A549 (cell line): ENCODE measurements at regions of chr1 and their contacts with region 1.

Region 1: DNA sequence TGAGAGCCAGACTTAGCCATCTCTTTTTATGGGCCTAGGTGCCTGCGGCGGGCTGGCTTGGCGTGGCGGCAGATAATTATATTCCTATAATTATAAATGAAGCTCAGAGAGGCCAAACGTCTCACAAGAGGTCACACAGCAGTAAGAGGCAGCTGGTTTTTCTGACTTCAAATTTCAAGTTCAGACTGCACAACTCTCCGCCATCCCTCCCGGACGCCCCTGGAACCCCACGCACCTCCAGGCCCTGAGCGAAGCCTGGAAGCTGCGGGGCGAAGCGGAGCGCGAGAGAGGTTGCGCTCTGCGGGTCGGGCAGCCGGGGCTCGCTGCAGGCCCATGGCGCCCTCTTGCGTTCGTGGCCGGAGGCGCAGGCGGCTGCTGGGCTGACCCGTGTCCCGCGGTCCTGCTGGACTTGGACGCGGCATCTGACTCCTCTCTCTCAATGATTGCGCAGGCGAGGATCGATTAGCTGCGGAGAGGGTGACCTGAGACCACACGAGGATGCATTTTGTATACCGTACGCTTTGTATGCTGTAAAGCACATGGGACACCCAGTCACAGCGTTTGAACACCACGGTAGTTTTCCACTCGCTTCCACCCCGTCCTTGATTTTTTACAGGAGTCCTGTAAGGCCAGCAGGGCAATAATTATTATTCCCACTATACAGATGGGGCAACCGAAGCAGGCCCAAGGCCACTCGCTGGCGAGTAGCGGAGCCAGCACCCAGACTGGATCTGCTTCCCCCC is 272.7 kb downstream of the FOXD2 start:
- DNase-seq: peak; percentile 49 to 84
- ATAC-seq: peak; percentile 81 to 90
- H3K4me3 ChIP-seq: peak overlapping the region; percentile 51
- H3K27ac ChIP-seq: peak overlapping the region; percentile 69 to 87; a peak in 4 of 6 replicates
- H3K4me1 ChIP-seq: peaks cover 12% of the 10 kb centered on the region; the same call in 2 of the 3 replicates
- CTCF ChIP-seq: peak; percentile 86
- EP300 ChIP-seq: no peak
- POLR2A ChIP-seq: no peak
- RAD21 ChIP-seq: peak; percentile 77 to 93

Region 2: GRCh38 chr1:47388891-47389238 is 321.6 kb before region 1 on chr1:
- CTCF ChIA-PET with region 1: interaction called, 15 read pairs
- POLR2A ChIA-PET with region 1: no interaction called
- DNase-seq: peak; percentile 53 to 60
- ATAC-seq: peak; percentile 94 to 96
- H3K4me3 ChIP-seq: no peak overlapping the region
- H3K27ac ChIP-seq: no peak overlapping the region
- H3K4me1 ChIP-seq: no peaks in the 10 kb centered on the region
- CTCF ChIP-seq: peak; percentile 63
- EP300 ChIP-seq: no peak
- POLR2A ChIP-seq: no peak
- RAD21 ChIP-seq: peak; percentile 70 to 74

Region 3: DNA sequence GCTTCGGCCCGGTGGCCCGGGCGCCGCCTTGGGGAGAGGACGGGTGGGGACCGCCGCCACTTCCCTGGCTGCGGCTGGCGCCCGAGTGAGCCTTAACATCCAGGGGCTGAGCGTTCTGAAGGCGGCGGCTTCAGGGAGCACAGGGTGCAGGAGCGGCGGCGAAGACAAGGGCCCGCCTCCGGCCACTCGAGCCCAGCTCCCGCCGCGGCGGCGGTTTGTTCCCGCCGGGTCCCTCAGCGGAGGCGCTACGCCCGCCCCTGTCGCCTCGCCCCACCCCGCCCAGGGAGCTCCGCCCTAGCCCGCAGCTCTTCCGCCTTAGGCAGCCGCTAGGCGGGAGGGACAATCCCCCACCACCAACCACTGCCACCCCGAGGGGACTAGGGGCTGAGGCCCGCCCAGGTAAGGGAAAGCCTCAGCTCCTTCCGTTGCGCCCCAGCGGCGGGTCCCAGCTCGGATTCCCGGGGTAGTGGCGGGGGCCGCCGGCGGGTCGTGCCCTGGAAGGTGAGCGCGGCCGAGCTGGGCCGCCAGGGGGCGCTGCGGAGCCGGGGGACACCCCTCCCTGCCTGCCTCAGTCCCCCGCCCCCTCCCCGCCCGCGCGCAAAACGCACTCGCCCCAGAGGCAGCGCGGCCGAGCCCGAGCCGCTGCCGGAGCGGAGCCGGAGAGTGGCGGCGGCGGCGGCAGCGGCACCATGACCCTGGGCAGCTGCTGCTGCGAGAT is 272.9 kb before region 1 on chr1 and contains the start of gene FOXD2:
- CTCF ChIA-PET with region 1: interaction called, 313 read pairs
- POLR2A ChIA-PET with region 1: interaction called, 13 read pairs
- DNase-seq: peak; percentile 77 to 84
- ATAC-seq: peak; percentile 88 to 90
- H3K4me3 ChIP-seq: peak within 1 kb of the TSS; percentile 96
- H3K27ac ChIP-seq: peak within 1 kb of the TSS; percentile 95 to 99
- H3K4me1 ChIP-seq: peaks cover 7% of the 10 kb centered on the region; the same call in 1 of the 3 replicates
- CTCF ChIP-seq: peak; percentile 94
- EP300 ChIP-seq: no peak
- POLR2A ChIP-seq: peak; percentile 58
- RAD21 ChIP-seq: peak; percentile 26 to 83; a peak in 4 of 5 replicates
- polyA plus RNA-seq, gene FOXD2: 0.12 and 0.13 TPM in 2 replicates

Region 4: GRCh38 chr1:47449822-47450552 is 260.5 kb before region 1 on chr1:
- CTCF ChIA-PET with region 1: interaction called, 52 read pairs
- POLR2A ChIA-PET with region 1: no interaction called
- DNase-seq: peak; percentile 39 to 67
- ATAC-seq: peak; percentile 77 to 95
- H3K4me3 ChIP-seq: no peak overlapping the region
- H3K27ac ChIP-seq: peak overlapping the region in 1 of 2 experiments; percentile 33; a peak in 1 of 6 replicates
- H3K4me1 ChIP-seq: no peaks in the 10 kb centered on the region
- CTCF ChIP-seq: peak; percentile 53
- EP300 ChIP-seq: no peak
- POLR2A ChIP-seq: no peak
- RAD21 ChIP-seq: peak; percentile 64 to 69

Region 5: GRCh38 chr1:47569681-47570470 is 140.6 kb before region 1 on chr1:
- CTCF ChIA-PET with region 1: interaction called, 18 read pairs
- POLR2A ChIA-PET with region 1: no interaction called
- DNase-seq: peak; percentile 84 to 86
- ATAC-seq: peak; percentile 93 to 99
- H3K4me3 ChIP-seq: no peak overlapping the region
- H3K27ac ChIP-seq: peak overlapping the region; percentile 63 to 80
- H3K4me1 ChIP-seq: peaks cover 12% of the 10 kb centered on the region
- CTCF ChIP-seq: peak; percentile 48
- EP300 ChIP-seq: no peak
- POLR2A ChIP-seq: no peak
- RAD21 ChIP-seq: peak; percentile 50 to 51; a peak in 4 of 5 replicates

Region 6: DNA sequence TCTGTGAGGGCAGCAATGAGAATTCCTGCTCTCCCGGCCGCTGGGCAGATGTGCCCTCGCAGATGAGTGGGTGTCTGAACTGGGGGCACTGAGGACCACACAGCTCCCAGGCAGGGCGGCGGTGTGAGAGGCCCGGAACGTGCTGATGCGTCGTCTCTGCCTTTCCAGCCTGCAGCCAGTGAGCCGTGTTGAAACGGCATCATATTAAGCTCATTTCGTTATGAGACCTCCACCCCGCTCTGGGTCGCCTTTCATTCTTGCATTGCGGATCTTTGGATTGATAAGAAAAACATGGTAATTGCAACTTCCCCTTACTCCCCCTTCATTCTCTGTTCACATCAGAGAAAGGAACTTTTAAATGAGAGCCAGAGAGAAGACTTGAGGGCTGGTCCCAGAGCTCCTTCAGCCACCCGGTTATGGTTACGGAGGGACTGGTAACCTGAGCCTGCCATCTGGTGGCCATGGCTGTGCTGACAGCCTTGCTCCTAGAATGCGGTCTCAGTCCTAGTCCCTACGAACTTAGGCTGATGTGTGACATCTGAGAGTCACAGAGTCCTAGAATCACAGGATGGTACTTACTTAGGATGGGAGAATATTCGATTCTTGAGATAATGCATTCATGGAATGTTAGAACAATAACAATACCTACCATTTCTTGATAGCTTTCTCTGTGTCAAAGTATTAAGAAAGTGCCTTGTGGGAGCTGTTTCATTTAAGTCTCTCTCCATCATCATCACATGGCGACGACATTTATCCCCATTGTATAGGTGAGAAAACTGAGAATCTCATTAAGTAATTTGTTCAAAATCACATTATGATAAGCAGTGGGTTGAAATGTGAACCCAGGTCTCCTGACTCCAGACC is 15.7 kb after region 1 on chr1:
- CTCF ChIA-PET with region 1: interaction called, 97 read pairs
- POLR2A ChIA-PET with region 1: no interaction called
- DNase-seq: peak; percentile 74 to 82
- ATAC-seq: peak; percentile 91 to 94
- H3K4me3 ChIP-seq: no peak overlapping the region
- H3K27ac ChIP-seq: no peak overlapping the region
- H3K4me1 ChIP-seq: peaks cover 22% of the 10 kb centered on the region; the same call in 2 of the 3 replicates
- CTCF ChIP-seq: peak; percentile 76
- EP300 ChIP-seq: no peak
- POLR2A ChIP-seq: no peak
- RAD21 ChIP-seq: peak; percentile 76 to 81